WTC11 (cell line): ENCODE measurements at regions of chr11 and their contacts with region 1.

Region 1: GRCh38 chr11:17770048-17770652 is 35.6 kb downstream of the KCNC1 start:
- DNase-seq: peak; percentile 49
- ATAC-seq: peak; percentile 29
- H3K4me3 Mint-ChIP-seq: no peak overlapping the region
- H3K27ac Mint-ChIP-seq: peak overlapping the region; percentile 38; the same call in 1 of the 2 replicates
- H3K4me1 Mint-ChIP-seq: peaks cover 4% of the 10 kb centered on the region; the same call in 1 of the 2 replicates
- H3K27me3 Mint-ChIP-seq: no peaks in the 10 kb centered on the region
- CTCF ChIP-seq: no peak

Region 2: GRCh38 chr11:17752144-17752543 is 18.0 kb before region 1 on chr11:
- CTCF ChIA-PET with region 1: interaction called, 15 read pairs
- POLR2A ChIA-PET with region 1: no interaction called
- DNase-seq: no peak
- ATAC-seq: no peak
- H3K4me3 Mint-ChIP-seq: no peak overlapping the region
- H3K27ac Mint-ChIP-seq: no peak overlapping the region
- H3K4me1 Mint-ChIP-seq: no peaks in the 10 kb centered on the region
- H3K27me3 Mint-ChIP-seq: no peaks in the 10 kb centered on the region; the same call in none of the 2 replicates
- CTCF ChIP-seq: no peak

Region 3: DNA sequence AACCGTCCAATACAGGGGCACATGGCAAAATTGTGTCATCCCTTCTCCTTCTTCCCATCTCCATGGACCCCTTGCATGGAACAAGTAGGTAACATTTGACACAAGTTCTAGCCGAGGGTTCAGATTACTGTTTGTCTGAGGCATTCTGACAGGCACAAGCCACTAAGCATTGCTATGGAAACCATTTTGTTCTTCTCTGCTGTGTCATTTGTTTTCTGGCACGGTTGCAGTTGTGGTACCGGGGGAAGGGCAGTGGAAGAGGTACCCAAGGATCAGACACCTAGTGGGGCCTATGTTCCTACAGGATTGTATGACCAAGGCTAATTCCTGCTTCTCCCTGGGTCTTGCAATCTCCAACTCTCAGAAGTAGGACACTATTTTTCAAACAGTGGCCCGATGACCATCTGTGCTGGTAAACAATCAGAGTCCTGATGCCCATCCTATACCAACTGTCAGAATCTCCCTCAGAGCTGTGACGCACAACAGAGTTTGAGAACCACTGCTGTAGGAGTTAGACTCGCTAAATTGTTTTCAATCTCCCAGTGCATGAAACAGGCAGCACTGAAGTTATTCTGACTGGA is 33.7 kb after region 1 on chr11:
- CTCF ChIA-PET with region 1: interaction called, 29 read pairs
- POLR2A ChIA-PET with region 1: no interaction called
- DNase-seq: no peak
- ATAC-seq: no peak
- H3K4me3 Mint-ChIP-seq: no peak overlapping the region
- H3K27ac Mint-ChIP-seq: no peak overlapping the region; the same call in 1 of the 2 replicates
- H3K4me1 Mint-ChIP-seq: peaks cover 24% of the 10 kb centered on the region
- H3K27me3 Mint-ChIP-seq: no peaks in the 10 kb centered on the region; the same call in none of the 2 replicates
- CTCF ChIP-seq: no peak

Region 4: GRCh38 chr11:17864478-17864941 is 94.4 kb after region 1 on chr11:
- CTCF ChIA-PET with region 1: interaction called, 22 read pairs
- POLR2A ChIA-PET with region 1: no interaction called
- DNase-seq: peak; percentile 53
- ATAC-seq: peak; percentile 89
- H3K4me3 Mint-ChIP-seq: no peak overlapping the region
- H3K27ac Mint-ChIP-seq: no peak overlapping the region
- H3K4me1 Mint-ChIP-seq: peaks cover 17% of the 10 kb centered on the region
- H3K27me3 Mint-ChIP-seq: no peaks in the 10 kb centered on the region
- CTCF ChIP-seq: peak; percentile 57

Region 5: GRCh38 chr11:17898782-17899181 is 128.6 kb after region 1 on chr11:
- CTCF ChIA-PET with region 1: interaction called, 13 read pairs
- POLR2A ChIA-PET with region 1: no interaction called
- DNase-seq: peak; percentile 23
- ATAC-seq: peak; percentile 99
- H3K4me3 Mint-ChIP-seq: no peak overlapping the region
- H3K27ac Mint-ChIP-seq: no peak overlapping the region
- H3K4me1 Mint-ChIP-seq: peaks cover 9% of the 10 kb centered on the region
- H3K27me3 Mint-ChIP-seq: no peaks in the 10 kb centered on the region
- CTCF ChIP-seq: no peak

Region 6: GRCh38 chr11:17960091-17960490 is 189.9 kb after region 1 on chr11:
- CTCF ChIA-PET with region 1: interaction called, 11 read pairs
- POLR2A ChIA-PET with region 1: no interaction called
- DNase-seq: no peak
- ATAC-seq: no peak
- H3K4me3 Mint-ChIP-seq: no peak overlapping the region
- H3K27ac Mint-ChIP-seq: no peak overlapping the region
- H3K4me1 Mint-ChIP-seq: peaks cover 6% of the 10 kb centered on the region; the same call in 1 of the 2 replicates
- H3K27me3 Mint-ChIP-seq: no peaks in the 10 kb centered on the region
- CTCF ChIP-seq: no peak